GM12878 (cell line): ENCODE measurements at regions of chr17 and their contacts with region 1.

Region 1: DNA sequence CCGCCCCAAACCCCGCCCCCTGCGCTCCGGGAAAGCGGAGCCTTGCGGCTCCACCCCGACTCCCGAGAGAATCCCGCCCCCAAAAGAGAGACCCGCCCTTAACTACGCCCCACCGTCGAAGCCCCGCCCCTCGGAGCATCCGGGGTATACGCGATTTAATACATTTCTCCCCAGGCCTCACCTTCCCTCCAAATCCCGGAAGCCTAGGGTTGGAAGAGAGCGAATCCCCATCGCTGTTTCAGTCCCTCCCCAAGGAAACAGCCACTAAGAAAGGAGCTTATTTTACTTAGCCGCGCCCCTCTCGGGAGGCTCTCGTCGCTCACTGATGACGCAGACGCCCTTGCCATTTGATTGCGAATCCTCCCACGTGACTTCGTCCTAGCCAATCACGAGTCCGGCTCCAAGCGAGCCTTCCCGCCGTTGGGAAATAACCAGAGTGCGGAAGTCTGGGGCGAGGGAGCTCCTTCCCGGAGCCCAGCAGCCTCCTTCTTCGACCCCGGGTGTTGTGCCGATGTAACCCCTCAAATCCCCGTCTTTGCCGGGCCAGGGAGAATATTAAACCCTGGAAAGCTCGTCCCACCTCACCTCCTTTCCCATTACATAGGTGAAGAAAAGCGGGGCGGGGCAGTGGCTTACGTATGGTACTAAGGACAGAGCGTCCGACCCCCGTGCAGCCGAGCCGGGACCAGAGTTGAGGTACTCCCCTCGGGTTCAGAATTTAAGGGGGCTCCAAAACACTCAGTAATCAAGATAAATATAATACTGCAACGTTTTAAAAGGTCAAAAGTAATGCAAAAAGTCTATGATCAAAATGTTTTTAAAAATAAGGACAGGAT is 462 bp upstream of the FDXR start:
- DNase-seq: peak; percentile 99
- ATAC-seq: peak; percentile 96
- H3K4me3 ChIP-seq: peak overlapping the region; percentile 82
- H3K27ac ChIP-seq: peak overlapping the region; percentile 96
- H3K4me1 ChIP-seq: peaks cover 14% of the 10 kb centered on the region
- H3K27me3 ChIP-seq: no peaks in the 10 kb centered on the region
- CTCF ChIP-seq: no peak
- EP300 ChIP-seq: peak in 1 of 2 experiments; percentile 36; a peak in 1 of 4 replicates
- POLR2A ChIP-seq: peak; percentile 86
- RAD21 ChIP-seq: no peak

Region 2: GRCh38 chr17:74776044-74776977 is 96.9 kb before region 1 on chr17 and contains the start of gene NAT9:
- CTCF ChIA-PET with region 1: interaction called, 3 read pairs
- POLR2A ChIA-PET with region 1: interaction called, 15 read pairs
- RAD21 ChIA-PET with region 1: interaction called, 5 read pairs
- SMC1A ChIA-PET with region 1: no interaction called
- in situ Hi-C with region 1: no loop called
- intact Hi-C with region 1: no loop called
- DNase-seq: peak; percentile 82
- ATAC-seq: peak; percentile 91
- H3K4me3 ChIP-seq: peak within 1 kb of the TSS; percentile 73
- H3K27ac ChIP-seq: peak within 1 kb of the TSS; percentile 59
- H3K4me1 ChIP-seq: peaks cover 28% of the 10 kb centered on the region
- H3K27me3 ChIP-seq: no peaks in the 10 kb centered on the region
- CTCF ChIP-seq: no peak
- EP300 ChIP-seq: no peak
- POLR2A ChIP-seq: peak; percentile 89
- RAD21 ChIP-seq: no peak
- polyA plus RNA-seq, gene NAT9: 3.5 to 4.5 TPM

Region 3: GRCh38 chr17:74928786-74929185 is 55.5 kb after region 1 on chr17:
- CTCF ChIA-PET with region 1: no interaction called
- POLR2A ChIA-PET with region 1: no interaction called
- RAD21 ChIA-PET with region 1: no interaction called
- SMC1A ChIA-PET with region 1: no interaction called
- in situ Hi-C with region 1: no loop called
- intact Hi-C with region 1: no loop called
- DNase-seq: no peak
- ATAC-seq: no peak
- H3K4me3 ChIP-seq: no peak overlapping the region
- H3K27ac ChIP-seq: no peak overlapping the region
- H3K4me1 ChIP-seq: no peaks in the 10 kb centered on the region
- H3K27me3 ChIP-seq: peaks cover 10 to 15% of the 10 kb centered on the region in 2 experiments
- CTCF ChIP-seq: no peak
- EP300 ChIP-seq: no peak
- POLR2A ChIP-seq: no peak
- RAD21 ChIP-seq: no peak

Region 4: DNA sequence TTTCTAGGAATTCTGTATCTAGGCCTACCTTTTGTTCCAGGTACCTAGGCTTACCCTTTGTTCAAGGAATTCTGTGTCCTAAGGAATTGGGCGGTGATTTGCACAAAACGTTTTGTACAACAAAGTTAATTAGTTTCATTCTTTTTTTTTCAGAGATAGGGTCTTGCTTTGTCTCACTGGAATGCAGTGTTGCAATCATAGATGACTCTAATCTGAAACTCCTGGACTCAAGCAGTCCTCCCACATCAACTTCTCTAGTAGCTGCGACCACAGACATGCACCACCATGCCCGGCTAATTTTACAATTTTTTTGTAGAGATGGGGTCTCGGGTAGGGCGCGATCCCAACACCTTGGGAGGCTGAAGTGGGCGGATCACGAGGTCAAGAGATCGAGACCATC is 121.2 kb after region 1 on chr17:
- CTCF ChIA-PET with region 1: no interaction called
- POLR2A ChIA-PET with region 1: no interaction called
- RAD21 ChIA-PET with region 1: no interaction called
- SMC1A ChIA-PET with region 1: no interaction called
- in situ Hi-C with region 1: no loop called
- intact Hi-C with region 1: no loop called
- DNase-seq: no peak
- ATAC-seq: no peak
- H3K4me3 ChIP-seq: no peak overlapping the region
- H3K27ac ChIP-seq: no peak overlapping the region
- H3K4me1 ChIP-seq: no peaks in the 10 kb centered on the region
- H3K27me3 ChIP-seq: peaks cover 0 to 3% of the 10 kb centered on the region in 2 experiments; a peak in 1 of 4 replicates
- CTCF ChIP-seq: no peak
- EP300 ChIP-seq: no peak
- POLR2A ChIP-seq: no peak
- RAD21 ChIP-seq: no peak